H1 (cell line): ENCODE measurements at regions of chr3 and their contacts with region 1.

Region 1: DNA sequence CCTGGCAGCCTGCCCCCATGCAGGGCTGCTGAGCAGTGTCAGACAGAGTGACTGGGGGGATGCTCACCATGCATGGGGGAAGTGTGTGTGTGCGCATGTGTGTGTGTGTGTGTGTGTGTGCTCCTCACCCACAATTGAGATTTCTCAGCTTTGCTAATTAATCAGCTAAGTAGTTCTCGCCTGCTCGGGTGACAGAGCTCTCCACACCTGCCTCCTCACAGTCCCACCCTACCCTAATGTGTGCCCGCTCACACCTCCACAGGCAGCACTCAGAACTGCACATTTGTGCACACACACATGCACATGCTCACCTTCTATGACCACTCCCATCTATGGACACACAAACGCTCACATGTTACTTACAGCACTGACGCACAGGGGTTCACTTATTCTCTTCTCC is 37.3 kb downstream of the CACNA2D2 start:
- DNase-seq: no peak
- H3K4me3 ChIP-seq: no peak overlapping the region
- H3K27ac ChIP-seq: no peak overlapping the region
- H3K4me1 ChIP-seq: peaks cover 0 to 4% (median 1%) of the 10 kb centered on the region in 4 experiments; a peak in 3 of 7 replicates
- H3K27me3 ChIP-seq: peaks cover 0 to 3% (median 0%) of the 10 kb centered on the region in 4 experiments; a peak in 1 of 7 replicates
- CTCF ChIP-seq: peak in 1 of 3 experiments; percentile 9; a peak in 1 of 4 replicates
- EP300 ChIP-seq: no peak
- POLR2A ChIP-seq: no peak
- RAD21 ChIP-seq: no peak

Region 2: DNA sequence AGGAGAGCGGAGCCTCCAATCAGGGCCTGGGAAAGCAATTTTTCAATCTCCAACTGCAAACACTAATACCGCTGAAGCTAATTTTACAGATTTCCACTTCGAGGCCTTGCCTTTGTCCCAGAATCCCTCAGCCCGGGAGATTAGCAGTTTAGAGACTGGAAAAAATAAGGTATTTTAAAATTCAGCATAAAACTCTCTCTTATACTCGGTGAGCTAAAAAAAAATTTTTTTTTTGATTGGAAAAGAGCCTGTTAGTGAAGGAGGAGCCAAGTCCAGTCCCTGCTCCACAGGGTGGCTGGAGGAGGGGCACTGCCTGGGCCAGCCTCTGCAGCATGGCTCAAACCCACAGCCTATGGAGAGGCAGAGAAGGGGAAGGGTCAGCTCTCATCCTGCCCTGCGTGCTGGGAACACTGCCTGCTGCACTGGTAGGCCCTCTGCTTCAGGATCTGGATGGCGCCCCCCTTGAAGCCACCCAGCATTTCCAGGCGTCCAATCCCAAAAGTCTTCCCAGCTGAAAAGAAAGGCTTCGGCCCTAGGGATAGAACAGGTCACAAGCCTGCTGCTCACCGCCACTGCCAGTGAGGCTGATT is 11.6 kb before region 1 on chr3:
- CTCF ChIA-PET with region 1: interaction called, 10 read pairs
- POLR2A ChIA-PET with region 1: interaction called, 4 read pairs
- DNase-seq: peak in 1 of 2 experiments; percentile 67
- H3K4me3 ChIP-seq: no peak overlapping the region
- H3K27ac ChIP-seq: no peak overlapping the region
- H3K4me1 ChIP-seq: peaks cover 0 to 31% (median 18%) of the 10 kb centered on the region in 4 experiments; a peak in 6 of 7 replicates
- H3K27me3 ChIP-seq: no peaks in the 10 kb centered on the region
- CTCF ChIP-seq: no peak
- EP300 ChIP-seq: no peak
- POLR2A ChIP-seq: no peak
- RAD21 ChIP-seq: no peak

Region 3: GRCh38 chr3:50495609-50496423 is 29.6 kb after region 1 on chr3:
- CTCF ChIA-PET with region 1: interaction called, 15 read pairs
- POLR2A ChIA-PET with region 1: no interaction called
- DNase-seq: no peak
- H3K4me3 ChIP-seq: peak overlapping the region in 2 of 4 experiments; percentile 8 to 32; a peak in 1 of 8 replicates
- H3K27ac ChIP-seq: no peak overlapping the region
- H3K4me1 ChIP-seq: peaks cover 14 to 47% (median 34%) of the 10 kb centered on the region in 4 experiments
- H3K27me3 ChIP-seq: peaks cover 0 to 2% (median under 1%) of the 10 kb centered on the region in 4 experiments; a peak in 3 of 7 replicates
- CTCF ChIP-seq: no peak
- EP300 ChIP-seq: no peak
- POLR2A ChIP-seq: no peak
- RAD21 ChIP-seq: no peak

Region 4: GRCh38 chr3:50532058-50532705 is 66.0 kb after region 1 on chr3:
- CTCF ChIA-PET with region 1: no interaction called
- POLR2A ChIA-PET with region 1: no interaction called
- DNase-seq: no peak
- H3K4me3 ChIP-seq: no peak overlapping the region
- H3K27ac ChIP-seq: no peak overlapping the region
- H3K4me1 ChIP-seq: peaks cover 0 to 17% (median 9%) of the 10 kb centered on the region in 4 experiments; a peak in 6 of 7 replicates
- H3K27me3 ChIP-seq: peaks cover 0 to 15% (median 14%) of the 10 kb centered on the region in 4 experiments; a peak in 5 of 7 replicates
- CTCF ChIP-seq: no peak
- EP300 ChIP-seq: no peak
- POLR2A ChIP-seq: no peak
- RAD21 ChIP-seq: no peak